Posterior vena cava (tissue), 2 donors: ENCODE measurements at regions of chr22 and their contacts with region 1.

Region 1: DNA sequence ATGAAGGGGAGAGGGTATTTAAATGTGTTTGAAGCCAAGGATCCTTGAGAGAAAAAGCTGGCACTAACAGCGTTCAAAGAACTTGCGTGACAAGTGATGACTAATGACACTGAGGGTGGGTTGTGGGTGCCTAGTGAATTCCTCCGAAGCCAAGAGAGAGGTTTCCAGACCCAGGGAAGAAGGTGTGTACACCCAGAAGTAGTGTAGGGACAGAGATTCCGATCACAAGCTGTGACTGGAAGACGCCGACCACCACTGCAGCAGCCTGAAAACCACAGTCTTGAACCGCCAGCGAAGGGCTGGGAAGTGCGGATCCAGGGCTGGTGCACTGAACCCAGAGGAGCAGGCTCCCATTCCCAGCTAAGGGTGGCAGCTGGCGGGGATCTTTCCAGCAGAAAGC is 9.5 kb downstream of the PPARA start:
- DNase-seq: no peak

Region 2: DNA sequence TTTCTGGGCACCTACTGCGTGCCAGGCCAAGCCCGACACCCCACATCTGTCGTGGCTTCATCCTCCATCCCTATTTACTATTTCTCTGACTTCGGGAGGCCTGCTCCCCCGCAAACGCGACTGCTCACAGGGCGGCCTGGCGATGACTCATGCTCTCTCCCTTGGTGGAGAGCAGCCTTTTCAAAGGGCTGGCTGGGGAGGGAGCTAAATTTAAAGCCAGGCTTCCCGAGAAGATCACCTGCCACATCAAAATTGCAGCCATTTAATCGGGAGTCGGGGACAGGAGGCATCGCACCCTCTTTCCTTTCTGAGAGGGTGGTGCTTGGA is 1822.1 kb before region 1 on chr22:
- intact Hi-C with region 1: loop called in 1 of 2 experiments (anchors 10 kb)
- DNase-seq: no peak

Region 3: DNA sequence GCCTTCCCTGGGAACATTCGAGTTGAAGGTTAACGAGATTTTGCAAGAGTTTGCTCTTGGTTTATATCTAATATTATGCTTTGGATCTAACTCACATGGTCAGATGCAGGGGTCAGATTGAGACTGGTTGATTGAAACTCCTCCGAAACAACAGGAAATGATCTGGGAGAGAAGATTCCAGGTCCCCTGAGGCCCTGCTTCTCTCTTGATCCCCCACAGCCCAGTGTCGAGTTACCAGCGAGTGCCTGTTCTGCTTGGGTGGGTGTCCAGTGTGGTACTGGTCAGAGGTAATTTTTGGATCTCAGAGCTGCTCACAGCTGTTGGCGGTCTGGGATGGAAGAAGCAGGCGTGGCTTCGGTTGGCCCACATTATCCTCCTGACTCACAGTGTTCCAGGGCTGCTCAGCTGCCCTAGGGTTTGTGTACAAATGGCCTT is 647.9 kb before region 1 on chr22:
- intact Hi-C with region 1: no loop called
- DNase-seq: peak; percentile 91

Region 4: DNA sequence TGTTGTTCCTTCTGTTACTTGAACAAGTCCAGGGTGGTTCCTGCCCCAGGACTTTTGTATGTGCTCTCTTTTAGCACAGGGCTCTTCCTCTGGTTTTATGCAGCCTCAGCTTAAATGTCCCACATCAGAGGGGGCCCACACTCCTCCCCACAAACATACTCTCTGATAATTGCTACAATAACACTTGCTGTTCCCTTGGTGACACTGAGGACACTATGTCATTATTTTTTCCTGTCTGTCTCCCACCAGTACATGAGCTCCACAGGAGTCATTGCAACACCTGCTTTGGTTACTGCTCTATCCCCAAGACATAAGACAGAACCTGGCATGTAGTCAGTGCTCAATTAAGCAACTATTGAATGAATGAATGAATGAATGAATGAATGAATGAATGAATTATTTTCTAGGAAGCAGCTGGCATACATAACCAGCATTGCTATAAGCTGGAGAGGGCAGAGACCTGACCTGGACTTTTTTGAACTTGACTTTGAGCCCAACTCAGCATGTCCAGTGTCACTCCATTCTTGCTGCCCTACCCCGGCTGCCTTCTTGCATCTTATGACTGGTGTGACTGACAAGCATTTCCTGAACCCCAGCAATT is 175.4 kb before region 1 on chr22:
- intact Hi-C with region 1: no loop called
- DNase-seq: no peak

Region 5: DNA sequence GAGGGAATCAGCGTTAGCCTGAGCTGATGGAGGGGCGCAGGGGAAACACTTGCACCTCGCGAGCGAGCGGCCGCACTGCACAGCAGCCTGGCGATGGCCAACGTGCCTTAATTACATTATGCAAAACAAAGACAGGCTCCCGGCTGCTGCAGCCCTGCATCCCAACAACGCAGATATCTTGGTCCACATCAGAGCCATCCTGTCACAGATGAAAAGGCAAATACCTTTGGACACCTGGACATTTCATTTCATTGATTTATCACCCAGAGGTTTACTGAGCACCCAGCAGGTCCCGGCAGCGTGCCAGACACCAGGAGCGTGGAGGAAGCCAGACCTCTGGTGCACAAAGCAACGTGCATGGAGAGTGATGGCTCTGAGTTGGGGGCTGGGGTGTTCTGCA is 1445.7 kb after region 1 on chr22:
- intact Hi-C with region 1: loop called in 1 of 2 experiments (anchors 10 kb)
- DNase-seq: peak; percentile 35